Mammary epithelial cell (primary cell): ENCODE measurements at regions of chr14 and their contacts with region 1.

Region 1: GRCh38 chr14:74618078-74618952 is 6.3 kb upstream of the LTBP2 start:
- DNase-seq: peak; percentile 72
- H3K4me3 ChIP-seq: no peak overlapping the region
- H3K27ac ChIP-seq: peak overlapping the region; percentile 23
- H3K4me1 ChIP-seq: peaks cover 94% of the 10 kb centered on the region
- H3K27me3 ChIP-seq: no peaks in the 10 kb centered on the region
- CTCF ChIP-seq: no peak

Region 2: GRCh38 chr14:74160763-74161162 is 457.6 kb before region 1 on chr14:
- CTCF ChIA-PET with region 1: no interaction called
- dilution Hi-C with region 1: no loop called
- in situ Hi-C with region 1: no loop called
- intact Hi-C with region 1: no loop called
- DNase-seq: no peak
- H3K4me3 ChIP-seq: no peak overlapping the region
- H3K27ac ChIP-seq: no peak overlapping the region
- H3K4me1 ChIP-seq: no peaks in the 10 kb centered on the region
- H3K27me3 ChIP-seq: no peaks in the 10 kb centered on the region
- CTCF ChIP-seq: no peak

Region 3: DNA sequence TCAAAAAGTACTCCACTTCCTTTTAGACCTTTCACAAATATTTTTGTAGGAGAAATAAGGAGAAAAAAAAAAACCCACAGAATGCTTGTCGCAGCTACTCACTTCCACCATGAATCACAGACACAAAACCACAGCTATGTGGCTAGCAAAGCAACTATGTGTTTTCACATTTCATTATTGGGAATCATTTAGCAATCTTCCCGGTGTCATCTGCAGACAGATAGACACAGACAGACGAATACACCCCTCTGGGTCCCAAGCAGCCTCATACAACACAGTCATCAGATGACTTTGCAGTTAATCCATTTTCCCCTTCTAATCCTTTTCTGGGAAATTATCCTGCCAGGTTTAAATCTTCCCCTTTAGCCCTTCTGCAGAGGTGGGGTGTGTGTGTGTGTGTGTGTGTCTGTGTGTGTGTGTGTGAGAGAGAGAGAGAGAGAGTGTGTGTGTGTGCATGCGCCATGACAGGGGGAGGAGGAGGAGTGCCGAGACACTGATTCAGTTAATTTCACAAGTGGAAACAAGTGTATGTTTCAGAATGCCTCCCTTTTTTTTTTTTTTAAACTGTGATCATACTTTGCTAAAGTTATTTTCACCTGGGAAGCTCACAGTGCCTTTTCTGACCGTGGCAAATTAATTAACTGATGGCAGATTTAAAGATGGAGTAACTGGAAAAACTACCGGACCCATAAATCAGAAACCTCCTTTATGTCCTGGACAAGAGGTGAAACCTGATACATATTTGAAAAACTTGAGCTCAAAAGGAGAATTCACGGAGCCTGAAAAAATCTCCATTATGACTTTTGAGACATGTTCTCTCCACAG is 46.2 kb before region 1 on chr14:
- CTCF ChIA-PET with region 1: no interaction called
- dilution Hi-C with region 1: loop called (anchors 5 kb)
- in situ Hi-C with region 1: no loop called
- intact Hi-C with region 1: no loop called
- DNase-seq: peak; percentile 99
- H3K4me3 ChIP-seq: peak overlapping the region; percentile 24 to 37 (median 30)
- H3K27ac ChIP-seq: peak overlapping the region; percentile 98
- H3K4me1 ChIP-seq: peaks cover 85% of the 10 kb centered on the region
- H3K27me3 ChIP-seq: no peaks in the 10 kb centered on the region
- CTCF ChIP-seq: no peak

Region 4: DNA sequence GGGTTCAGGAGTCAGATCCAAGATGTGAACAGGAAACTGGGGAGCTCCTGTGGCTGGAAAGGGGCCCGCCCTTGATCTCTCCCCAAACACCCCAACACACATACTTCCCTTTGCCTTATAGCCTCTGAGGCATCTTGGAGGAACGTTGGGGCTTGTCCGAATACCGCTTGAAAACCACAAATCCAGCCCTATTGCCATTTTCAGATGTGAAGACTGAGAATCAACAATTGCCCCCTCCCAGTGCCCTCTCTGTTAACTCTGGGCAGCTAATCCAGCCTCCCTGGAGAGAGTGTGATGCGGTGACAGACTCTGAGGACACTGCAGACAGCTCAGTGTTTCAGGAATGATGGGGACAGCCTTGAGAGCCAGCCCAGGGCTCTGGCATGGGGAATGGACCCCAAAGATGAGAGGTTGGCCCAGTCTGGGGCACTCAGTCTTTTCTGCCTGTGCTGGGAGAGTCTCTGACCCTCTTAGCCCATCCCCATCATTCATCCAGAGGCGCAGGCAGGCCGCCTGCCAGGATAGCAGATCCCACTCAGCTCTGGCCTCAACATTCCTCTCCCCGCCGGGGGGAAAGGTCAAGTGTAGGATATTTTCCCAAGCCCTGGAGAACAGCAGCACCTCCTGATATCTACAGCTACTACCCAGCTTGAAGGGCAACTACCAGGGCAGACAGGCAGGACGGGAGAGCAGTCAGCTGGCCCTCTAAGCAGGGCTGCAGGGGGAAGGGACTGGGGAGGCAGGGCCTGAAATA is 18.3 kb after region 1 on chr14:
- CTCF ChIA-PET with region 1: interaction called, 8 read pairs
- dilution Hi-C with region 1: no loop called
- in situ Hi-C with region 1: no loop called
- intact Hi-C with region 1: loop called (anchors 2 kb)
- DNase-seq: peak; percentile 74
- H3K4me3 ChIP-seq: no peak overlapping the region
- H3K27ac ChIP-seq: peak overlapping the region; percentile 47
- H3K4me1 ChIP-seq: peaks cover 34% of the 10 kb centered on the region
- H3K27me3 ChIP-seq: no peaks in the 10 kb centered on the region
- CTCF ChIP-seq: no peak

Region 5: GRCh38 chr14:74647678-74648461 is 29.6 kb after region 1 on chr14:
- CTCF ChIA-PET with region 1: no interaction called
- dilution Hi-C with region 1: no loop called
- in situ Hi-C with region 1: no loop called
- intact Hi-C with region 1: loop called (anchors 2 kb)
- DNase-seq: peak; percentile 57
- H3K4me3 ChIP-seq: no peak overlapping the region
- H3K27ac ChIP-seq: no peak overlapping the region
- H3K4me1 ChIP-seq: peaks cover 73% of the 10 kb centered on the region
- H3K27me3 ChIP-seq: no peaks in the 10 kb centered on the region
- CTCF ChIP-seq: no peak

Region 6: GRCh38 chr14:74663884-74664283 is 45.6 kb after region 1 on chr14:
- CTCF ChIA-PET with region 1: no interaction called
- dilution Hi-C with region 1: loop called (anchors 5 kb)
- in situ Hi-C with region 1: no loop called
- intact Hi-C with region 1: no loop called
- DNase-seq: no peak
- H3K4me3 ChIP-seq: no peak overlapping the region
- H3K27ac ChIP-seq: no peak overlapping the region
- H3K4me1 ChIP-seq: peaks cover 23% of the 10 kb centered on the region
- H3K27me3 ChIP-seq: no peaks in the 10 kb centered on the region
- CTCF ChIP-seq: no peak

Region 7: GRCh38 chr14:74675219-74675618 is 56.9 kb after region 1 on chr14:
- CTCF ChIA-PET with region 1: no interaction called
- dilution Hi-C with region 1: no loop called
- in situ Hi-C with region 1: no loop called
- intact Hi-C with region 1: no loop called
- DNase-seq: no peak
- H3K4me3 ChIP-seq: no peak overlapping the region
- H3K27ac ChIP-seq: no peak overlapping the region
- H3K4me1 ChIP-seq: peaks cover 16% of the 10 kb centered on the region
- H3K27me3 ChIP-seq: no peaks in the 10 kb centered on the region
- CTCF ChIP-seq: no peak

Region 8: GRCh38 chr14:75088574-75089373 is 470.5 kb after region 1 on chr14:
- CTCF ChIA-PET with region 1: no interaction called
- dilution Hi-C with region 1: no loop called
- in situ Hi-C with region 1: no loop called
- intact Hi-C with region 1: no loop called
- DNase-seq: peak; percentile 52
- H3K4me3 ChIP-seq: no peak overlapping the region
- H3K27ac ChIP-seq: no peak overlapping the region
- H3K4me1 ChIP-seq: peaks cover 3% of the 10 kb centered on the region
- H3K27me3 ChIP-seq: no peaks in the 10 kb centered on the region
- CTCF ChIP-seq: peak; percentile 77 to 82